Naive thymus-derived CD4-positive, alpha-beta T cell (primary cell): ENCODE measurements at regions of chrX and their contacts with region 1.

Region 1: GRCh38 chrX:130079824-130080406 is 30.4 kb downstream of the ELF4 start:
- DNase-seq: peak in 8 of 9 donors; percentile 13 to 66 (median 52)
- ATAC-seq: no peak
- H3K4me3 ChIP-seq: no peak overlapping the region
- H3K4me3 Mint-ChIP-seq: peak overlapping the region in 7 of 10 donors; percentile 14 to 64 (median 47)
- H3K27ac ChIP-seq: peak overlapping the region; percentile 41
- H3K27ac Mint-ChIP-seq: peak overlapping the region; percentile 66 to 92 (median 85)
- H3K4me1 ChIP-seq: peaks cover 26 to 30% of the 10 kb centered on the region in 2 donors
- H3K4me1 Mint-ChIP-seq: peaks cover 19 to 46% (median 42%) of the 10 kb centered on the region in 7 donors
- H3K27me3 ChIP-seq: no peaks in the 10 kb centered on the region
- H3K27me3 Mint-ChIP-seq: no peaks in the 10 kb centered on the region

Region 2: DNA sequence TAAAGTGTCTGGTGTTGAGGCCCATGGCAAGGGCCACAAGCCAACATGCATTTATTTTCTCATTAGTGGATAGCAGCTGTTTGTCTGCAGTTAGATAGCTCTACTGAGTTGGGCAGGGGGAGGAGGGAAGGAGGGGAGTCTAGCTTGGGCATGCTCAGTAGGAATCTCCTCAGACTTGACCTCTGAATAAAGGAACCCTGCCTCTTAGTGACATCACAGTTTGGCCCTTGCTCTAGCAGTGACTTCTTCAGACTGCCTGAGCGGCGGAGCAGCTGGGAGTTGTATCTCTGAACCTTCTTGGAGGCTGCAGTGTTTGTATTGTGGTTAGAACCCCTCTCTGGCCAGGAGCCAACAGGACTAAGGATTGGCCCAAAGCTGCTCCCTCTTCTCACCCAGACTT is 40.1 kb before region 1 on chrX:
- CTCF ChIA-PET with region 1: no interaction called
- POLR2A ChIA-PET with region 1: no interaction called
- intact Hi-C with region 1: no loop called
- DNase-seq: no peak
- ATAC-seq: no peak
- H3K4me3 ChIP-seq: no peak overlapping the region
- H3K4me3 Mint-ChIP-seq: no peak overlapping the region
- H3K27ac ChIP-seq: no peak overlapping the region
- H3K27ac Mint-ChIP-seq: no peak overlapping the region
- H3K4me1 ChIP-seq: no peaks in the 10 kb centered on the region
- H3K4me1 Mint-ChIP-seq: no peaks in the 10 kb centered on the region
- H3K27me3 ChIP-seq: no peaks in the 10 kb centered on the region
- H3K27me3 Mint-ChIP-seq: no peaks in the 10 kb centered on the region

Region 3: DNA sequence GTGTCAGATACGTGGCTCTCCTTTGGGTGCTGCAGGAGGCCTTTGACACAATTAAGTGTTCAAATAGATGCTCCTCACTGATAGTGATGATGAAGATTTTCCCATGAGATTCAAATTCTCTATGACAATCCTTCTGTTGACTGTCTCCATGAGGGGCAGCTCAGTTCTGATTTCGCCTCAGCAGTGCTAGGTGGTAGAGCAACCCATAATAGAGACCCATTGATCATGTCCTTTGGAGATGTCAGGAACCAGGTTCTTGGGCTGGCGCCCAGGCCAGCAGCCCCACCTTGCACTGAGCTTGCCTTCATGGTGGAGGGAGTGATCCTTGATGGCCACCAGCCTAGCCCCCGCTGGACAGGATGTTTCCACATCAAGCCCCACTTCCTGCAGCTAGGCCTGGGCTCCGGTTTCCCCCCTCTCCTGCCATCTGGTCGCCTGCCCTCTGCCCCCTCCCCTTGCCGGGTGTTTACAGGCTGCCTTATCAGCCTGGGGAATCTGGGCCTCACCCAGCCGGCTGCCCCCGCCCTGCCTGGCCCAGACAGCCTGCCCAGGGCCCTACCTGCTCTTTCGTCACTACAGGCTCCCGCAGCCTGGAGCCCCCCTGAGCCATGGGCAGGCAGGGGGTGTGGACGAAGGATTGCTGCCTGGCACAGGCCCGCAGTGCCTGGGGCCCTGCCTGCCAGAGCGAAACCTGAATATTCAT is 17.7 kb after region 1 on chrX:
- CTCF ChIA-PET with region 1: interaction called, 9 read pairs
- POLR2A ChIA-PET with region 1: interaction called, 44 read pairs
- intact Hi-C with region 1: loop called (anchors 1 kb)
- DNase-seq: peak in 3 of 9 donors; percentile 29 to 54 (median 37)
- ATAC-seq: peak; percentile 89
- H3K4me3 ChIP-seq: peak overlapping the region; percentile 4
- H3K4me3 Mint-ChIP-seq: peak overlapping the region; percentile 60 to 82 (median 66)
- H3K27ac ChIP-seq: peak overlapping the region; percentile 62
- H3K27ac Mint-ChIP-seq: peak overlapping the region; percentile 29 to 94 (median 89)
- H3K4me1 ChIP-seq: peaks cover 43 to 59% of the 10 kb centered on the region in 2 donors
- H3K4me1 Mint-ChIP-seq: peaks cover 17 to 86% (median 57%) of the 10 kb centered on the region in 7 donors
- H3K27me3 ChIP-seq: no peaks in the 10 kb centered on the region
- H3K27me3 Mint-ChIP-seq: no peaks in the 10 kb centered on the region

Region 4: GRCh38 chrX:130120746-130121504 is 41.0 kb after region 1 on chrX:
- CTCF ChIA-PET with region 1: interaction called, 83 read pairs
- POLR2A ChIA-PET with region 1: interaction called, 6 read pairs
- intact Hi-C with region 1: loop called (anchors 1 kb)
- DNase-seq: peak; percentile 50 to 75 (median 68)
- ATAC-seq: peak; percentile 91
- H3K4me3 ChIP-seq: peak overlapping the region; percentile 53
- H3K4me3 Mint-ChIP-seq: peak overlapping the region; percentile 29 to 74 (median 71)
- H3K27ac ChIP-seq: no peak overlapping the region
- H3K27ac Mint-ChIP-seq: peak overlapping the region in 1 of 9 donors; percentile 58
- H3K4me1 ChIP-seq: no peaks in the 10 kb centered on the region
- H3K4me1 Mint-ChIP-seq: peaks cover 0 to 19% (median 4%) of the 10 kb centered on the region in 7 donors
- H3K27me3 ChIP-seq: no peaks in the 10 kb centered on the region
- H3K27me3 Mint-ChIP-seq: no peaks in the 10 kb centered on the region

Region 5: GRCh38 chrX:130196466-130196865 is 116.6 kb after region 1 on chrX:
- CTCF ChIA-PET with region 1: interaction called, 18 read pairs
- POLR2A ChIA-PET with region 1: interaction called, 6 read pairs
- intact Hi-C with region 1: loop called (anchors 1 kb)
- DNase-seq: no peak
- ATAC-seq: no peak
- H3K4me3 ChIP-seq: no peak overlapping the region
- H3K4me3 Mint-ChIP-seq: no peak overlapping the region
- H3K27ac ChIP-seq: no peak overlapping the region
- H3K27ac Mint-ChIP-seq: peak overlapping the region in 1 of 9 donors; percentile 38
- H3K4me1 ChIP-seq: no peaks in the 10 kb centered on the region
- H3K4me1 Mint-ChIP-seq: peaks cover 0 to 4% (median 0%) of the 10 kb centered on the region in 7 donors
- H3K27me3 ChIP-seq: no peaks in the 10 kb centered on the region
- H3K27me3 Mint-ChIP-seq: no peaks in the 10 kb centered on the region

Region 6: GRCh38 chrX:131812836-131813825 is 1733.2 kb after region 1 on chrX:
- CTCF ChIA-PET with region 1: no interaction called
- POLR2A ChIA-PET with region 1: no interaction called
- intact Hi-C with region 1: loop called (anchors 2 to 10 kb)
- DNase-seq: peak; percentile 36 to 97 (median 95)
- ATAC-seq: peak; percentile 96
- H3K4me3 ChIP-seq: peak overlapping the region; percentile 69
- H3K4me3 Mint-ChIP-seq: peak overlapping the region; percentile 78 to 98 (median 90)
- H3K27ac ChIP-seq: peak overlapping the region; percentile 75
- H3K27ac Mint-ChIP-seq: peak overlapping the region; percentile 92 to 98 (median 95)
- H3K4me1 ChIP-seq: peaks cover 9% of the 10 kb centered on the region in 2 donors
- H3K4me1 Mint-ChIP-seq: peaks cover 2 to 35% (median 28%) of the 10 kb centered on the region in 7 donors
- H3K27me3 ChIP-seq: no peaks in the 10 kb centered on the region
- H3K27me3 Mint-ChIP-seq: no peaks in the 10 kb centered on the region